ENCODE measurements at regions of chr2 and their contacts with region 1.

Region 1: DNA sequence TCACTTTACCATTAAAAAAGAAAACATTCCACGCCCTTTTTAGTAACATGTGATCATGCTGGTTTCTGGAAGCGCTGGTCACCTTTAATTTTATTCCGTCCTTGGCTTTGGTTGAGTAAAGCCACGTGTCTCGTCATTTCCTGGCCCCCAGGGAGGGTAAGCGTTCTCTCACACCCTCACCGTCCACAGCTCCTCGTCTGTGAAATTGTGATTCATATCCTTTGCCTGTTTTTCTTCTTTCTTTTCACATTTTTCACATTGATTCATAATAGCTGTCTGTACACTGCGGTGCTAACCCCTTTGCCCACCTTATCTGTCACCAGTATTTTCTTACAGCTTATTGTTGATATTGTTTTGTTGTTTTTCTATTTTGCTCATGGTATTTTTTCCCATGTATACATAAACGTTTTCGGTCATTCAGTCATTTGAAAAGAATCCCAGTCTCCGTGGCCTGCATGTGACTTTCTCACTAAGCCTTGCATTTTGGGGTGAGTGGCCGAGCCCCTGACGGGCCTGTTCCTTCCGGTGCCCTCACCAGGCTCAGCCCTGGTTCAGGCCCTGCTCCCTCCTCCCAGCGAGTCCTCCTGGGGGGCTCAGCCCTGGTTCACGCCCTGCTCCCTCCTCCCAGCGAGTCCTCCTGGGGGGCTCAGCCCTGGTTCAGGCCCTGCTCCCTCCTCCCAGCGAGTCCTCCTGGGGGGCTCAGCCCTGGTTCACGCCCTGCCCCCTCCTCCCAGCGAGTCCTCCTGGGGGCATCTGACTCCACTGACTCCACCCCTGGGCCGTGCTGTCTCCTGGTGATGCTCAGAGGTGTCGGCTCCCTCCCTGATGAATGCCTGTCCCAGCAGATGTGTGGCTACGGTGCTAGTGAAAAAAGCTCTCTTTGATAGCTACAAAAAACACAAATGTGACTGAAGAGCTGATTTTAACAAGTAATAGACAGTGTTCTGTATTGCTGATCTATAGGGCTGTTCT is 249.7 kb upstream of the PXDN start:
- DNase-seq: peak; percentile 87
- H3K4me3 Mint-ChIP-seq: peak overlapping the region; percentile 56
- H3K27ac Mint-ChIP-seq: peak overlapping the region; percentile 93
- H3K4me1 Mint-ChIP-seq: peaks cover 30% of the 10 kb centered on the region
- H3K27me3 Mint-ChIP-seq: no peaks in the 10 kb centered on the region
- CTCF ChIP-seq: no peak

Region 2: DNA sequence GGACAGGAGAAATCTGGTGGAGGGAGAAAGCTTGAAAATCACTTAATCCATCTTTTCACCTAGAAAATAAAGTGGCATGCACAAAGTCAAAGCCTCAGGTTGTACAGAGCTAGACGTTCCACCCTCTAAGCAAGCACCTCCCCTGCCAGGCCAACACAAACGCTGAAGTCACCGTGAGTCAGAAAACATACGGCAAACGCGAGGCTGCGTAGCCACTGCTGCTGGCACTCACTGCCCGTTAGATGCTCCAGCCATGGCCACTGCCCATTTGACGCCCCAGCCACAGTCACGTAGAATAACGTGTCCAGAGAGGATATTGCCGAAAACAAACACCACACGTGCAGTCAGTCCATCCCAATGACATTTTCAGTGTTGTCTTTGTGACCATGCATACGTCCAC is 39.9 kb before region 1 on chr2:
- CTCF ChIA-PET with region 1: no interaction called
- POLR2A ChIA-PET with region 1: no interaction called
- intact Hi-C with region 1: no loop called
- DNase-seq: peak; percentile 17
- H3K4me3 Mint-ChIP-seq: no peak overlapping the region
- H3K27ac Mint-ChIP-seq: no peak overlapping the region
- H3K4me1 Mint-ChIP-seq: no peaks in the 10 kb centered on the region
- H3K27me3 Mint-ChIP-seq: peaks cover 34% of the 10 kb centered on the region
- CTCF ChIP-seq: no peak

Region 3: DNA sequence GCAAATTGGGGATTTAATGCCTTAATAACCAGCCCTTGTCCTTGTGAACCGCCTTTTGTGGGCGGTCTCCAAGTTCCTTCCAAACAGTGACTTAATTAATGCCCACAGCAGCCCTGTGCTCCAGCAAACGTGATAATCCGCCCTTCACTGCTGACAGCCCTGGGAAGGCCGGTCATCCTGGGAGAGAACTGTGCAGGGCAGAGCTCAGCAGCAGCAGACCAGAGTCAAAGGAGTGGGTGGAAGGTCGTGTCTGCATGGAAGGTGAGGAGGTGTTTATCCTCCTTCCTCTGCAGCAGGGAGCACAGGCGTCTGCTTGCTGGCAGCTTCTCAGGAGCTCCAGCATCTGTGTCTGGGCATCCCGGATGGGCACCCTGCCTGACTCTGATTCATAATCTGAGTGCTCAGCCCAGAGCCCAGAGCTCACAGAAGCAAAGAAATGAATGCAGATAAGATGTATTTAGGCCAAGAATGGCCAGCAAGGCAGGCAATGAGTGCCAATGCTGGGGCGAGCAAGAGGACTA is 20.3 kb after region 1 on chr2:
- CTCF ChIA-PET with region 1: no interaction called
- POLR2A ChIA-PET with region 1: interaction called, 3 read pairs
- intact Hi-C with region 1: loop called (anchors 1 kb)
- DNase-seq: peak; percentile 86
- H3K4me3 Mint-ChIP-seq: no peak overlapping the region
- H3K27ac Mint-ChIP-seq: no peak overlapping the region
- H3K4me1 Mint-ChIP-seq: peaks cover 22% of the 10 kb centered on the region
- H3K27me3 Mint-ChIP-seq: no peaks in the 10 kb centered on the region
- CTCF ChIP-seq: no peak

Measured in MCF 10A (cell line).